Tibial artery (tissue), 4 donors: ENCODE measurements at regions of chr1 and their contacts with region 1.

Region 1: DNA sequence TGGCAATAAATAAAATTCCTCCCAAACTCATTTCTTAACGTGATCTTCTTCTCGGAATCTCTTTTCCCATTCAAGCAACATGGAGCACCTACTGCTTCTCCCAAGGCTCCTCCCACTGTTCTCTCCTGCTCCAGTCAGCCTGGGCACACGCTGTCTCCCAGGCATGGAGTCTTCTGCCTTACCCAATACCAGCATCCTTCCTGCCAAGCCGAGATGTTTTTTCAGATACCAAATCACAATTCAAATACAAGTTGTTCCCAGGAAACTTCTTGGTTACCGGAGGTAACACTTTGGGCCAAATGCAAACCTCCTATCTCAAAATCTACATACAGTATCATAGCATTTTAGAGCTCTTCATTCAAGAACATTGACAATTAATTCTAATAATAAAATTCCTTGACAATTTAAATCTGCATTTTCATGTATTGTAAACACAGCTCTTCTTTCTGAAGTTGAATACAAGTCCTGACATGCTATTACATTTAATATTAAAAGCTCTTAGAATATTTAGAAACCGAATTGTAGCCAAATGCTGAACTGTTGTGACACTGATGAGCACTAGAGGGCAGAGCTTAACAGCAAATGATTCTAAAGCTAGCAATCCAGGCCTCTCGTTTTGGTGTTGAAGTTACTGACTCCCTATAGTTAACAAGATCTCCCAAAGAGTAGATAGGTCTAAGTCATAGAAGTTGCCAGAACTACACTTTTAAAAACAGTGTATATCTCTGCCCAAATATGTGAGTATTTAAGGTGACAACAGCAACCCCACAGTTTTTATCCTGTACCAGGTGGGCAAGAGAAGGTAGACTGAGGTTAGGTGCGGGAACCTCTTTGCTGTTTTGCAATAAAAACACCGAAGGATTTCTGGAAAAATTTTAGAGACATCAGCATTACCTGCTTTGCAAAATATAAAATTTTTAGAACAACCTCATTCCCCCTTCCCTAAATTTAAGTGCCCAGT is 52.3 kb downstream of the BCAR3 start:
- DNase-seq: peak in 1 of 2 donors; percentile 35
- H3K4me3 ChIP-seq: no peak overlapping the region
- H3K27ac ChIP-seq: peak overlapping the region in 1 of 2 donors; percentile 33
- H3K4me1 ChIP-seq: peaks cover 0 to 12% (median 0%) of the 10 kb centered on the region in 4 donors
- H3K27me3 ChIP-seq: no peaks in the 10 kb centered on the region
- CTCF ChIP-seq: peak; percentile 80 to 91

Region 2: DNA sequence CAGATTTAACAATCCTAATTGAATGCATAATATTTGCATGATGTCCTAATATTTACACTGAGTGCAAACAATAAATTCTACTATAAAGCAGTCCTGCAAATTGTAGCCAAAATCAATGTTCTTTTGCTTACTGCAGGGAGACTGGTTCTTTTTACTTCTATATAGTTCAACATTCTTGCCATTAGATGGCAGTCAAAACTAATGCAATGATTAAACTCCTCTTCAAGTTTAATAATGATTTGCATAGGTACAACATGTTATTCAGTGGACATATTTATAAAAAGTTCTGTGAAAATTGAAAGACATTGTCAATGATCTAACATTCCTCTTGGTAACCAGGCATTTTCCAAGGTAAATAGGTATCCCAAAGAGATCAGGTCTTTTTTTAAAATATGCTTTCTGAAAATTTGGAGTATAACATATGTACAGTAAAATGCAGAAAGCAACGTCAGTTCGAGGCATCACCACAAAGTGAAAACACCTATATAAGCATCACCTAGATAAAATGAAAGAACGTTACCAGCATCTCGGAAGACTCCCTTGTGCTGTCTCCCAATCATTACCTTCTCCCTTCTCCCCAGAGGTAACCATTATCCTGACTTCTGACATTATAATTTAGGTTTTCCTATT is 191.3 kb before region 1 on chr1:
- intact Hi-C with region 1: loop called (anchors 10 kb)
- DNase-seq: no peak
- H3K4me3 ChIP-seq: no peak overlapping the region
- H3K27ac ChIP-seq: no peak overlapping the region
- H3K4me1 ChIP-seq: no peaks in the 10 kb centered on the region
- H3K27me3 ChIP-seq: peaks cover 0 to 7% of the 10 kb centered on the region in 2 donors
- CTCF ChIP-seq: peak; percentile 66 to 76

Region 3: GRCh38 chr1:93680757-93681550 is 51.6 kb after region 1 on chr1:
- intact Hi-C with region 1: no loop called
- DNase-seq: peak; percentile 90 to 91
- H3K4me3 ChIP-seq: peak overlapping the region; percentile 75 to 77
- H3K27ac ChIP-seq: peak overlapping the region; percentile 87 to 88
- H3K4me1 ChIP-seq: peaks cover 0 to 20% (median 12%) of the 10 kb centered on the region in 4 donors
- H3K27me3 ChIP-seq: no peaks in the 10 kb centered on the region
- CTCF ChIP-seq: peak; percentile 64 to 65

Region 4: GRCh38 chr1:93814059-93814794 is 184.8 kb after region 1 on chr1:
- intact Hi-C with region 1: loop called (anchors 2 kb)
- DNase-seq: peak in 1 of 2 donors; percentile 53
- H3K4me3 ChIP-seq: no peak overlapping the region
- H3K27ac ChIP-seq: no peak overlapping the region
- H3K4me1 ChIP-seq: peaks cover 0 to 17% (median 8%) of the 10 kb centered on the region in 4 donors
- H3K27me3 ChIP-seq: no peaks in the 10 kb centered on the region
- CTCF ChIP-seq: peak; percentile 98 to 99

Region 5: GRCh38 chr1:93846211-93846991 is 217.0 kb after region 1 on chr1:
- intact Hi-C with region 1: loop called (anchors 5 kb)
- DNase-seq: peak; percentile 91 to 93
- H3K4me3 ChIP-seq: peak overlapping the region; percentile 85 to 88
- H3K27ac ChIP-seq: peak overlapping the region; percentile 97 to 98
- H3K4me1 ChIP-seq: peaks cover 0 to 29% (median 11%) of the 10 kb centered on the region in 4 donors
- H3K27me3 ChIP-seq: no peaks in the 10 kb centered on the region
- CTCF ChIP-seq: peak; percentile 34 to 36